GM10248 (cell line): ENCODE measurements at regions of chr7 and their contacts with region 1.

Region 1: DNA sequence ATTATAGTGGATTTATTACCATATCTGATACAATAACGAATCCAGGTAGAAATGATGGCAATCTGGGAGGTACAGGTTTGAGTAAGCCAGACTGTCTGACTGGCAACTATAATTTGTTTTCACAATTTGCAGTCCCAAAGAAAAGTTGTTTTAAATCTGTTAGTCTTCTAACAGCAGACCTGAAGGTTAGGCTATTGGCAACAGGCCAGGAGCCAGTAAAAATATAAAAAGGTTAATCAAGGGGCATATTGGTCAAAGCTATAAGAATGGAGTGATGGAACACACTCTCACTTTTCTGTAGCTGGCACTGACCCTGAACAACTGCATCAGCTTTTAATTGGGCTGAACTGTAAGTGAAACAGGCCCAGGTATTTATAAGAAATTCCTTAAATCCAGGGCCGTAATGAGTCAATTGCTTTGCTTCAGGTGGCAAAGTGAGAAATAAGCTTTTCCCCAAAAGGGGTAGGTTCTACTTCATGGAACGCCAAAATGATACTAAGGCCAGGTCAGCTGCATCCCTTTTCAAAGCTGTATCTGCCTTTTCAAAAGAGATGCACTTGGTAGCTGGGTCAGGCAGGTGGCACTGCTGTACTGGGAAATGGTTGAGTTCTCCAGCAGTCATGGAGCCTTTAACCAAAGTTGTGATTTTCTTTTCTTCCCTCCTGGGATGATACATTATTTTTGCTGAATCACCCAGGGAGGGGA is 7.0 kb upstream of the GPR22 start:
- DNase-seq: peak; percentile 14
- CTCF ChIP-seq: peak; percentile 74

Region 2: DNA sequence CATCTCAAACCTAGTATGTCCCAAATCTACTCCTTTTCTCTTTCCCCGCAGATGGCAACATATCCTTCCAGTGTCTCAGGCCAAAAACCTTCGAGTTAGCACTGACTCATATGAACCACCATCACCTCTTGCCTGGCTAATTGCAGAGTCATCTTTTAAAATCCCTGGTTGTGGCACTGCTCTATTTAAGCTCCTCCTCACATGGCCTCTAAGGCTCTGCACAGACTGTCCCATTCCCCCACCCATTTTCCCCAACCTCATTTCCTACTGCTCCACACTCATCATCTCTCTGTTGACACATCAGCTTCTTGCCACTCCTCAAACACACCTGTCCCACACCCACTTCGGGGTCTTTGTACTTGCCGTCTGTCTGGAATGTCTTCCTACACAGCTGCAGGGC is 310.9 kb before region 1 on chr7:
- CTCF ChIA-PET with region 1: no interaction called
- POLR2A ChIA-PET with region 1: no interaction called
- DNase-seq: no peak
- CTCF ChIP-seq: no peak

Region 3: GRCh38 chr7:107173691-107174406 is 289.0 kb before region 1 on chr7:
- CTCF ChIA-PET with region 1: no interaction called
- POLR2A ChIA-PET with region 1: no interaction called
- DNase-seq: peak; percentile 54
- CTCF ChIP-seq: no peak

Region 4: DNA sequence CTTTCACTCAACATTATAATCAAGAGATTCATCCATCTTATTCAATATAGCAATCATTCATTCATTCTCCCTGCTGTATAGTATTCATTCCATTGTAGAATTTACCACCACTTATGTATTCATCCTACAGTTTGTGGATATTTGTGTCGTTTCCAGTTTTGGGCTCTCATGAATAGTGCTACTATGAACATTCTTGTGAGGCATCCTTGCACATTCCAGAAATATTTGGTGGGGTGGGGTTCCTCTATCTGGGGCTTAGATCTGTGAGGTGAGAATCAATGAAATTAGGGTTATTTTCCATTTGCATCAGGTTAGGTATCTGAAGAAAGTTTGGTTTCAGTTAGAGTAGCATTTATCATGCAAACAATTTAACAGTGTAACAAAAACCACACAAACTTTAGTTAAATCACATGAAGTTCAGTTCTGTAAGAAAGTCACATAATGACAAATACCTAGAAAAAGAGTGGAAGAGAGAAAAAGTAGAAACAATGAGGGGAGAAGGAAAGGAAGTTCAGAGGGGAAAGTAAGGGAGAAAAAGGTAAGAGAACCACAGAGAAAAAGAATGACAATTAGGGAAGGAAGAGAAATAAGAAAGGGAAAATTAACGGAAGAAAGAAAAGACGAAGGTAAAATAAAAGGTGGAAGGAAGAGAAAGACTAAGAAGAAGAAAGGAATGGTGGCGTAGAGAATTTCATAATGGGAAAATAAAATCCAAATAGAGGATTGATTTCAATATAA is 255.7 kb after region 1 on chr7:
- CTCF ChIA-PET with region 1: interaction called, 17 read pairs
- POLR2A ChIA-PET with region 1: no interaction called
- DNase-seq: no peak
- CTCF ChIP-seq: no peak

Region 5: GRCh38 chr7:107725151-107725740 is 262.4 kb after region 1 on chr7:
- CTCF ChIA-PET with region 1: interaction called, 32 read pairs
- POLR2A ChIA-PET with region 1: no interaction called
- DNase-seq: peak; percentile 66
- CTCF ChIP-seq: peak; percentile 63